ENCODE measurements at regions of chr11 and their contacts with region 1.

Region 1: DNA sequence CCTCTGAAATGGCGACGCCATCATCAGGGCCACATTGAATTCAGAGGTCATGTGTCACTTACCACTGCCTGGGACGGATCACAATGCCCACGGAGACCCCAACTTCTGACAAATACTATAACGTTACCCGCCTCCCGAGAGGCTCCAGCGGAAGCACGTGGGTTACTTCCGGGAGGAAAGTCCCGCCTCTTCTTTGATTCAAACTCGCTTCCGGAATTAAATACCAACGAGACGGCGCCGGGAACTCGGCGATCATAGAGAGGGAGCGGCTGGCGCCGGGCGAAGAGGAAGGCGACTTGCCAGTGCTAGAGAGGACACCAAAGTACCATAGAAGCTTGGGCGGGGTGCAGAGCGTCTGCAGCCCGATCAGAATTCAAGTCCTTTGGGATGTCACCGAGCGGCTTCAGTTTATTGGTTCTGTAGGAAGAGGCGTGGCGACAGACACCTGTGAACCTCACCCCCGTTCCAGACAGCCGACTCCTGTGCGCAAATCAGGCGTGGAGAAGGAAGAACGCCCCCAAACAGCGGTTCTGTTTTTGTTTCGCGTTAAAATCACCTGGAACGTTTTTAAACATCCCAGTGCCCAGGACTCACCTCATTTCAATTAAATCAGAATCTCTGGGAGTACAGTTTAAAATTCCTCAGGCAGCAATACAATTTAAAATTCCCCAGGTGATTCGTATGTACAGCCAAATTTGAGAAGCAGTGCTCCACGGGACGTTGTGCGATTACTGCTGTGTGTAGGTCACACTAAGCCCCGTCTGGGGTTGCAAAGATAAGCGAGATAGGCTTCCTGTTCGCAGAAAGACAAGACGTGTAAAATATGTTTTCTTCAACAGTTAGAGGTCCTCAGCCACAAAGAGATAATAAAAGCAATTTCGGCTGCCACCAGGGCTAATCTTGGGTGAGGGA is at the start of gene TIMM10:
- DNase-seq: peak; percentile 96
- H3K4me3 Mint-ChIP-seq: peak within 1 kb of the TSS; percentile 84
- H3K27ac Mint-ChIP-seq: peak within 1 kb of the TSS; percentile 90
- H3K4me1 Mint-ChIP-seq: peaks cover 44% of the 10 kb centered on the region
- H3K27me3 Mint-ChIP-seq: no peaks in the 10 kb centered on the region
- total RNA-seq, gene TIMM10: 82.4 to 86.1 TPM

Region 2: DNA sequence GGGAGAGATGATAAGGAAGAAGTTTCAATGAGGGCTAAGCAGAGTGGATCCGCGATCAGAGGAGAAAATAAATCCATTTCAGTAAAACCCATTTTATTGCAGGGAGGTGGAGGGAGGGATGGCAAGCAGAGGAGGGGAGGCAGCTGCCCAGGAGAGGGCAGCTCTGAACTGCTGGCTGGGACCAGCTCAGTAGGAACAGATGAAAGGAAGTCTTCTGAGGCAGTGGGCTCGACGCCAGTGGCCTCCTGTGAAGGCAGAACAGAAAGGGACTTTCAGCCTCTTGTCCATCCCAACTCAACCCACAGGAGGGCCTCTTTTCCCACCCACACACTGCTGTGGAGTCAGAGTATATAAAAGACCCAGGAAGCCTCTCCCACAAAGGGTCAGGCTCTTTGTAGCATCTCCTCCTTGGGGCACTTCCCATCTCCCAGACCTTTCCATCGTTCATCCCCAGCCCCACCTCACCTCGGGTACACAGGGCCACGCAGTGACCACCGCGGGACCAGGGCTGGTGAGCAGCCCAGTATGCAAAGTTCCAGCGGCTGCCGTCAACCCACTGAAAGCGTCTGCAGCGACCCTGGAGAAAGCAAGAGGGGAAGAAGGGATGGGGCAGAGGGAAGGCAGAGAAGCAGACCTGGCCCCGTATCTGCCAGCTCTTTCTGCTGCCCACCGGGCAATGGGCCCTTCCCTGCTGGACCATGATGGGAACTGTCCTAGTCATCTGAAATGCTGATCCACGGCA is 143.4 kb before region 1 on chr11:
- CTCF ChIA-PET with region 1: no interaction called
- POLR2A ChIA-PET with region 1: no interaction called
- DNase-seq: no peak
- H3K4me3 Mint-ChIP-seq: no peak overlapping the region
- H3K27ac Mint-ChIP-seq: no peak overlapping the region
- H3K4me1 Mint-ChIP-seq: peaks cover 5% of the 10 kb centered on the region
- H3K27me3 Mint-ChIP-seq: peaks cover 3% of the 10 kb centered on the region

Region 3: GRCh38 chr11:57480409-57481137 is 50.3 kb before region 1 on chr11:
- CTCF ChIA-PET with region 1: interaction called, 33 read pairs
- POLR2A ChIA-PET with region 1: no interaction called
- DNase-seq: peak; percentile 81
- H3K4me3 Mint-ChIP-seq: no peak overlapping the region
- H3K27ac Mint-ChIP-seq: no peak overlapping the region
- H3K4me1 Mint-ChIP-seq: peaks cover 12% of the 10 kb centered on the region
- H3K27me3 Mint-ChIP-seq: peaks cover 55% of the 10 kb centered on the region

Region 4: GRCh38 chr11:57487920-57488659 is 42.8 kb before region 1 on chr11:
- CTCF ChIA-PET with region 1: interaction called, 296 read pairs
- POLR2A ChIA-PET with region 1: interaction called, 14 read pairs
- DNase-seq: no peak
- H3K4me3 Mint-ChIP-seq: no peak overlapping the region
- H3K27ac Mint-ChIP-seq: no peak overlapping the region
- H3K4me1 Mint-ChIP-seq: peaks cover 3% of the 10 kb centered on the region
- H3K27me3 Mint-ChIP-seq: peaks cover 4% of the 10 kb centered on the region

Region 5: GRCh38 chr11:57501953-57502352 is 28.9 kb before region 1 on chr11:
- CTCF ChIA-PET with region 1: interaction called, 296 read pairs
- POLR2A ChIA-PET with region 1: interaction called, 3 read pairs
- DNase-seq: no peak
- H3K4me3 Mint-ChIP-seq: no peak overlapping the region
- H3K27ac Mint-ChIP-seq: no peak overlapping the region
- H3K4me1 Mint-ChIP-seq: peaks cover 4% of the 10 kb centered on the region
- H3K27me3 Mint-ChIP-seq: no peaks in the 10 kb centered on the region

Region 6: GRCh38 chr11:57515332-57516060 is 15.4 kb before region 1 on chr11 and contains the start of gene SLC43A1:
- CTCF ChIA-PET with region 1: interaction called, 84 read pairs
- POLR2A ChIA-PET with region 1: interaction called, 58 read pairs
- DNase-seq: peak; percentile 50
- H3K4me3 Mint-ChIP-seq: peak within 1 kb of the TSS; percentile 98
- H3K27ac Mint-ChIP-seq: peak within 1 kb of the TSS; percentile 74
- H3K4me1 Mint-ChIP-seq: peaks cover 32% of the 10 kb centered on the region
- H3K27me3 Mint-ChIP-seq: no peaks in the 10 kb centered on the region
- total RNA-seq, gene SLC43A1: 29.9 to 31.7 TPM

Region 7: DNA sequence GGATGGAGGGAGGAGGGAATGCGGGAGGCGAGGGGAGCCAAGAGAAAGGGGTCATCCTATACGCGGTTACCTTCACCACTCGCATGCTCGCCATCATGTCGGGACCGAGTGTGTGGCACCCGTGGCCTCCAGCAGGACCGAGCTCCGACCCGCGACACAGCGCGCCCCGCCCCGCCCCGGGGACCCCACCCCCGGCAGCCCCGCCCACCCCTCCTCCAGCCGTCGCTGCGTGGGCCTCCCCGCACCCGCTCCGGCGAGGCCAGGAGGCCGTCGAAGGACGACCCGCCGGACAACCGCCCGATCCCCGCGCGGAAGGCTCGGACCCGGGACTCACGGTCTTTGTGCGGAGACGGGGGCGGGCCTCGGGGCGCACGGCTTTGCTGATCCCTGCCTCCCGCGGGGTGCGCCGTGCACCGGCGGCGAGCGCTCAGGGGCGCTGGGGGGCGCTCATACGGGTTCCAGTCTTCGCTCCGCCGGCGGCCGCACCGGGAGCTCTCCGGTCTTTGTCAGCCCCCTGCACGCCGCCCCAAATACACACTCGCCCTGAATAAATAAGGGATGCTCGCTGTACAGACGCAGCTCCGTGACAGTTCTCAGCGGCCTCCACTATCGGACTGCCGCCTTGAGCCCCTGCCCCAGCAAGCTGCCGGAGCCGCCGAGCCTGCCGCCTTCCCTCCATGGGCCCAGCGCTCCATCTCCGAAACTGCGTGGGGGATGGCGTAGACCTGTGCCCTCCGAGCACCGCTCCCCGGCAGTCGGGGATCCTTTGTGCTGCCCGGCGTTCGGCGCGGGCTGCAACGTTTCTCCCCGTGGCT is 36.9 kb after region 1 on chr11 and contains the start of gene UBE2L6:
- CTCF ChIA-PET with region 1: interaction called, 18 read pairs
- POLR2A ChIA-PET with region 1: interaction called, 10 read pairs
- DNase-seq: peak; percentile 68
- H3K4me3 Mint-ChIP-seq: peak within 1 kb of the TSS; percentile 99
- H3K27ac Mint-ChIP-seq: peak within 1 kb of the TSS; percentile 98
- H3K4me1 Mint-ChIP-seq: peaks cover 30% of the 10 kb centered on the region
- H3K27me3 Mint-ChIP-seq: no peaks in the 10 kb centered on the region
- total RNA-seq, gene UBE2L6: 281 to 285 TPM

Region 8: GRCh38 chr11:57644748-57645688 is 114.2 kb after region 1 on chr11:
- CTCF ChIA-PET with region 1: interaction called, 11 read pairs
- POLR2A ChIA-PET with region 1: no interaction called
- DNase-seq: peak; percentile 85
- H3K4me3 Mint-ChIP-seq: no peak overlapping the region
- H3K27ac Mint-ChIP-seq: no peak overlapping the region
- H3K4me1 Mint-ChIP-seq: peaks cover 31% of the 10 kb centered on the region
- H3K27me3 Mint-ChIP-seq: peaks cover 64% of the 10 kb centered on the region

Measured in activated CD4-positive, alpha-beta memory T cell treated with anti-CD3 and anti-CD28 coated beads, Interleukin-2, amount 10 ng/mL, durations not matched to agents 7 days and 5 days (primary cell).